Activated CD4-positive, alpha-beta memory T cell treated with anti-CD3 and anti-CD28 coated beads, Interleukin-2, amount 10 ng/mL, durations not matched to agents 7 days and 5 days (primary cell): ENCODE measurements at regions of chr18 and their contacts with region 1.

Region 1: GRCh38 chr18:5237723-5238370 is 40.8 kb upstream of the AKAIN1 start:
- DNase-seq: peak; percentile 84
- H3K4me3 Mint-ChIP-seq: peak overlapping the region; percentile 91
- H3K27ac Mint-ChIP-seq: peak overlapping the region; percentile 88
- H3K4me1 Mint-ChIP-seq: peaks cover 33% of the 10 kb centered on the region
- H3K27me3 Mint-ChIP-seq: peaks cover 8% of the 10 kb centered on the region

Region 2: GRCh38 chr18:5214583-5215351 is 23.1 kb before region 1 on chr18:
- CTCF ChIA-PET with region 1: interaction called, 3 read pairs
- POLR2A ChIA-PET with region 1: interaction called, 10 read pairs
- DNase-seq: no peak
- H3K4me3 Mint-ChIP-seq: no peak overlapping the region
- H3K27ac Mint-ChIP-seq: no peak overlapping the region
- H3K4me1 Mint-ChIP-seq: peaks cover 12% of the 10 kb centered on the region
- H3K27me3 Mint-ChIP-seq: peaks cover 6% of the 10 kb centered on the region

Region 3: DNA sequence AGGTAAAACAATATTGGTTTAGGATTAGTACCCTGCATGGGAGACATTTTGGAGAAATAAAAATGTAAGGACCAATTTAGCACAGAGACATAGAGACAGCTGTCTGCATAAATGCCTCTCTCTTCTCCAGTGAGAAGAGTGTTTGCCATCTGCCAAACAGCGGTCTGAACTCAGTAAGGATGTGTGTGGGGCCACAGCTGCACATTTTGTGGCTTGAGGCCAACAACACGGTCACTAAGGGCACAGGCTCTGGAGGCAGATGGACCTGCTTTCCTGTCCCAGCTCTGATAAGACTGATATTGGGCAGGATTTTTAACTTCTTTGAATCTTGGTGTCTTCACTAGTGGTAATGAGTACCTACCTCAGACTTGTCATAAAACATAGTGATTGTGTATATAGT is 47.5 kb after region 1 on chr18:
- CTCF ChIA-PET with region 1: no interaction called
- POLR2A ChIA-PET with region 1: interaction called, 14 read pairs
- DNase-seq: no peak
- H3K4me3 Mint-ChIP-seq: no peak overlapping the region
- H3K27ac Mint-ChIP-seq: no peak overlapping the region
- H3K4me1 Mint-ChIP-seq: peaks cover 2% of the 10 kb centered on the region
- H3K27me3 Mint-ChIP-seq: no peaks in the 10 kb centered on the region

Region 4: GRCh38 chr18:5295981-5296705 is 58.3 kb after region 1 on chr18:
- CTCF ChIA-PET with region 1: interaction called, 41 read pairs
- POLR2A ChIA-PET with region 1: interaction called, 230 read pairs
- DNase-seq: peak; percentile 96
- H3K4me3 Mint-ChIP-seq: peak overlapping the region; percentile 78
- H3K27ac Mint-ChIP-seq: peak overlapping the region; percentile 87
- H3K4me1 Mint-ChIP-seq: peaks cover 28% of the 10 kb centered on the region
- H3K27me3 Mint-ChIP-seq: peaks cover 10% of the 10 kb centered on the region

Region 5: DNA sequence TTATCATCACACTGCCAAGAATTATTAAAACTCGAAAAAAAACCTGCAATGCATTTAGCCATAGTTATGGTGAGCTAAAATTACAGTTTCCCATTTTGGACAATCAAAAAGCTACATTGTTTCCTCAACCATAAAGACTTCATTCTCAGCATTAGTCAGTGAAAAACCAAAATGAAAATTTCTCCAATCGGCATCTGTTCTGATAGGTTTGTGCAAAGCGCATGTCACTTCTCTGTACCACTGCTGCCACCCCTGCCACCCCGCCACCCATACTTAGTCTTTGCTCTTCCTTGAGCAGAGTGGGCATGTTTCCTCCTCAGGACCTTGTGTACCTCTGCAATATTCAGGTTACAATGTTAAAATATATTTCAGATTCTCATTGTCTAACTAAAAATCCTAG is 64.8 kb after region 1 on chr18:
- CTCF ChIA-PET with region 1: interaction called, 41 read pairs
- POLR2A ChIA-PET with region 1: interaction called, 230 read pairs
- DNase-seq: no peak
- H3K4me3 Mint-ChIP-seq: no peak overlapping the region
- H3K27ac Mint-ChIP-seq: no peak overlapping the region
- H3K4me1 Mint-ChIP-seq: peaks cover 1% of the 10 kb centered on the region
- H3K27me3 Mint-ChIP-seq: peaks cover 37% of the 10 kb centered on the region